B cell (primary cell): ENCODE measurements at regions of chr9 and their contacts with region 1.

Region 1: DNA sequence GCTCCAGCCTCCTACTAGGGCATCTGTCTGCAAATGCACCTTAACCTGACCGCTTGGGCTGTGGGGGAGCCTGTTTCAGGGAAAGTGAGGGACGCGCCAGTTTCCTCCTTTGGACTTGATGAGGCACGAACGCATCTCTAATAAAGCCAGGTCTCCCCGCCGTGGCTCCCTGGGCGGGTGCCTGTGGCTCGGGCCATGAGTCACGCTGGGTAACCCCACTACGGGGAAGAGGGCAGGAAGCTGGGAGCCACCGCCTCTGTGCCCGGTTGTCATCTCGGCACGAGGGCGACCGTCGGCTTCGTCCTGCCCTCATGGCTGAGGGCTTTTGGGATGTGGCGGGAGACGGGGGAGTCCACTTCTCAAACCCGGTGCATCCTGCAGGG is 12.1 kb downstream of the NOTCH1 start:
- DNase-seq: peak; percentile 58
- ATAC-seq: peak; percentile 42
- H3K4me3 ChIP-seq: peak overlapping the region in 1 of 5 experiments; percentile 6
- H3K4me3 Mint-ChIP-seq: peak overlapping the region; percentile 67
- H3K27ac ChIP-seq: peak overlapping the region in 1 of 2 donors; percentile 18
- H3K27ac Mint-ChIP-seq: peak overlapping the region; percentile 41
- H3K4me1 ChIP-seq: peaks cover 91 to 95% of the 10 kb centered on the region in 2 donors
- H3K4me1 Mint-ChIP-seq: peaks cover 72% of the 10 kb centered on the region
- H3K27me3 ChIP-seq: no peaks in the 10 kb centered on the region
- H3K27me3 Mint-ChIP-seq: no peaks in the 10 kb centered on the region
- CTCF ChIP-seq: no peak

Region 2: DNA sequence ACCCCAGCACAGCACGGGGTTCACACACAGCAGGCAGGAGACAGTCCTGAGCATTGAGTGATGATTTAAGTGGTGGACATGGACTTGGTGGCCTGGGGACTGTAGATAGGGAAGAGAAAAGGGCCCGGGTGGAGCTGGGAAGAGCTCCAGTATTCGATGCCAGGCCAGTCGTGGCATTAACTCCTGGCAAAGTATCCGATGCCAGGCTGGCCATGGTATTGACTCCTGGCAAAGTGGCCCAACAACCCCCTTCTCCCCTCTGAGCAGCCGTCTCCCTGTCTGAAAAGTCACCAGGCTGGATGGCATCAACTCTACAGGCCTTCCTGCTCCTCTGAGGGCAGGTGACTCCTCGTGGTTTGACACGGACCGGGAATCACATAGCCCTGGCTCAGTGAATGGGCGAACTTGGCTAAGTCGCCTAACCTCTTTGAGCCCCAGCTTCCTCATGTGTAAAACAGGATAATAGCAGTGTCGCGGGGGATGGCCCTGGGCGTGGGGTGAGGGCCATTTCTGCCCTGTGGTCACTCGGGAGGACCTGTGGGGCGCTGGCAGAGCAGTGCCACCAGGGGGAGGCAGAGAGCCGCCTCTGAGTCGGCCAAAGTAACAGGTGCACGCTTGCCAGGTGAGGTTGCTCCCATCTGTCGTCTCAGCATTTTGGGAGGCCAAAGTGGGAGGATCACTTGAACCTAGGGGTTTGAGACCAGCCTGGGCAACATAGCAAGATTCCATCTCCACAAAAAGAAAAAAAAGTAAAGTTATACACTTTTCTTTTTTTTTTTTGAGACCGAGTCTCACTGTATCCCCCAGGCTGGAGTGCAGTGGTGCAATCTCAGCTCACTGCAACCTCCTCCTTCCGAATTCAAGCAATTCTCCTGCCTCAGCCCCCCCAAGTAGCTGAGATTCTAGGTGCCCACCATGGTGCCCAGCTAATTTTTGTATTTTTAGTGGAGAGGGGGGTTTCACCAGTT is 45.2 kb before region 1 on chr9:
- CTCF ChIA-PET with region 1: interaction called, 23 read pairs
- POLR2A ChIA-PET with region 1: interaction called, 3 read pairs
- intact Hi-C with region 1: no loop called
- DNase-seq: peak; percentile 81
- ATAC-seq: peak; percentile 52
- H3K4me3 ChIP-seq: no peak overlapping the region
- H3K4me3 Mint-ChIP-seq: no peak overlapping the region
- H3K27ac ChIP-seq: no peak overlapping the region
- H3K27ac Mint-ChIP-seq: no peak overlapping the region
- H3K4me1 ChIP-seq: peaks cover 14 to 20% of the 10 kb centered on the region in 2 donors
- H3K4me1 Mint-ChIP-seq: peaks cover 6% of the 10 kb centered on the region
- H3K27me3 ChIP-seq: peaks cover 0 to 10% (median 2%) of the 10 kb centered on the region in 4 experiments
- H3K27me3 Mint-ChIP-seq: no peaks in the 10 kb centered on the region
- CTCF ChIP-seq: peak; percentile 97